Ascending aorta (tissue), 2 donors: ENCODE measurements at regions of chr1 and their contacts with region 1.

Region 1: DNA sequence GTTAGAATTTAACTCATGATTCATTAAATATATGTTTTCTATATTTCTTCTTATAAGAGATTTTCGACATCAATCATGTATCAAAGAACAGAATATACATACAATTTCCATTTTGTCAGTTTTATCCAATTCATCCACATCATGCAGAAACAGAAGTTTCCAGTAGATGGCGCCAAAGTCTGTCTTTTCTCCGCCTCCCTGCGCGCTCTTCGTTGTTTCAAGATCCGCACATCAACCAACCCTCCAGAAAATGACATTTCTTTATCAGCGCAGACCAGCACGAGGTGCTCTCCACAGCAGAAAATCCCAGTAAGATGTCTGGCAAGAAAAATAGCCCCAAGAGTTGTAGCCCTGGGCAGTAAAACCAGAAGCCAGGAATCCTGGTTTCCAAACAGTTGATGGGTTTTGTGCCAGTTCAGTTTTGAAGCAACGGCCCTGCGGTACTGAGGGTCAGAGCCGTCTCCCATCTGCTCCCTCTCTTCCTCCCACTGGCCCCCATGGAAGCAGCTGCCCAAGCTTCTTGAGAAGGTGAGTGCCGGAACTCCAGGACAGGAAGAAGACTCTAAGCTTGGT is 38.6 kb upstream of the GPR137B start:
- DNase-seq: peak in 1 of 2 donors; percentile 73
- H3K4me3 ChIP-seq: no peak overlapping the region
- H3K27ac ChIP-seq: no peak overlapping the region
- H3K4me1 ChIP-seq: no peaks in the 10 kb centered on the region
- H3K27me3 ChIP-seq: no peaks in the 10 kb centered on the region
- CTCF ChIP-seq: peak; percentile 71 to 82 (median 75)

Region 2: DNA sequence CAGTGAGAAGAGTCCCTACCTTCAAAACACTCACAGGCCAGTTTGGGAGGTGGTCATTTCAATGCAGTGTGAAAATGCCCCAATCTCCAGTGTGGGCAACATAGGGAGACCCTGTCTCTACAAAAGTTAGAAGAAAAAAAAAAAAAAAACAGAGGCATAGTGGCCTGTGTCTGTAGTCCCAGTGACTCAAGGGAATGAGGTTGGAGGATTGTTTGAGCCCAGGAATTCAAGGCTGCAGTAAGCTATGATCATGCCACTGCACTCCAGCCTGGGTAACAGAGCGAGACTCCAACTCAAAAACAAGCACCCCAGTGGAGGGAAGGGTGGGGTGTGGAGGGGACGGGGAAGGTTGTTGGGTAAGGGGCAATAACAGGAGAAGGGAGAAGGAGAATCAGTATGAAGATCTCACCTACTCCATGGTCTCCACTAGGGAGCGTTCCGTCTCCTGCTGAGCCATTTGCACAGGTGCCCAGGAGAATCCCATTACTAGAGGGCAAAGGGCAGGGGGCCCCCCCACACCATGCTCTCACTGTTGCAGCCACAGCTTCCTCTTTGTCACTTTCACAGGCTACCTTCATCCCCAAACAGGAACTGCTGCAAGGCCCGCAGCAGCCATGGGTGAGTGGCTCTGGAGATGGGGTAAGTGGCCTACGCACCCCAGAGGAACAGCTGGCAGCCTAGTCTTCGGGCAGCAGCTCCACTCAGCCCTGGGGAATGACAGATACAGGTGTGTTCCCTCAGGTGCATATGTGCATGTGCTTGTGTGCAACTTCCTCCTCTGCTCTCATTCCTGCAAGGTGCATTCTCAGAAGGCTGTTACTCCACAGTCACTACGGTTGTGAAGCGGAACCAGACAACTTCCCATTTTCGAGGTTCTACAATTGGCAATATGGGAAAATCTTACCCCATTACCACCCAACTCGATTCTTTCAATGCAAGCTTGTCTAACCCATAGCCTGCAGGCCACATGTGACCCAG is 149.1 kb before region 1 on chr1:
- intact Hi-C with region 1: no loop called
- DNase-seq: no peak
- H3K4me3 ChIP-seq: no peak overlapping the region
- H3K27ac ChIP-seq: no peak overlapping the region
- H3K4me1 ChIP-seq: no peaks in the 10 kb centered on the region
- H3K27me3 ChIP-seq: no peaks in the 10 kb centered on the region
- CTCF ChIP-seq: no peak

Region 3: GRCh38 chr1:236168716-236169429 is 65.1 kb after region 1 on chr1:
- intact Hi-C with region 1: no loop called
- DNase-seq: peak in 1 of 2 donors; percentile 24
- H3K4me3 ChIP-seq: no peak overlapping the region
- H3K27ac ChIP-seq: no peak overlapping the region
- H3K4me1 ChIP-seq: no peaks in the 10 kb centered on the region
- H3K27me3 ChIP-seq: no peaks in the 10 kb centered on the region
- CTCF ChIP-seq: no peak

Region 4: GRCh38 chr1:236228411-236228810 is 124.7 kb after region 1 on chr1:
- intact Hi-C with region 1: no loop called
- DNase-seq: no peak
- H3K4me3 ChIP-seq: no peak overlapping the region
- H3K27ac ChIP-seq: no peak overlapping the region
- H3K4me1 ChIP-seq: no peaks in the 10 kb centered on the region
- H3K27me3 ChIP-seq: no peaks in the 10 kb centered on the region
- CTCF ChIP-seq: no peak

Region 5: GRCh38 chr1:236489710-236490377 is 386.1 kb after region 1 on chr1:
- intact Hi-C with region 1: loop called (anchors 2 kb)
- DNase-seq: no peak
- H3K4me3 ChIP-seq: no peak overlapping the region
- H3K27ac ChIP-seq: no peak overlapping the region
- H3K4me1 ChIP-seq: no peaks in the 10 kb centered on the region
- H3K27me3 ChIP-seq: no peaks in the 10 kb centered on the region
- CTCF ChIP-seq: peak; percentile 18 to 55 (median 45)

Region 6: GRCh38 chr1:236534151-236534651 is 430.5 kb after region 1 on chr1:
- intact Hi-C with region 1: loop called (anchors 10 kb)
- DNase-seq: no peak
- H3K4me3 ChIP-seq: no peak overlapping the region
- H3K27ac ChIP-seq: no peak overlapping the region
- H3K4me1 ChIP-seq: peaks cover 0 to 7% of the 10 kb centered on the region in 2 donors
- H3K27me3 ChIP-seq: no peaks in the 10 kb centered on the region
- CTCF ChIP-seq: no peak